ENCODE measurements at regions of chr11 and their contacts with region 1.

Region 1: GRCh38 chr11:62542750-62543567 is 3.6 kb downstream of the AHNAK start:
- DNase-seq: peak in 1 of 2 experiments; percentile 96
- H3K4me3 ChIP-seq: peak overlapping the region in 2 of 4 experiments; percentile 20 to 45; a peak in 4 of 8 replicates
- H3K27ac ChIP-seq: no peak overlapping the region
- H3K4me1 ChIP-seq: peaks cover 4 to 38% (median 23%) of the 10 kb centered on the region in 4 experiments
- H3K27me3 ChIP-seq: peaks cover 33 to 51% (median 48%) of the 10 kb centered on the region in 4 experiments
- CTCF ChIP-seq: peak in 2 of 3 experiments; percentile 96 to 97; a peak in 3 of 4 replicates
- EP300 ChIP-seq: no peak
- POLR2A ChIP-seq: no peak
- RAD21 ChIP-seq: peak; percentile 91 to 95

Region 2: DNA sequence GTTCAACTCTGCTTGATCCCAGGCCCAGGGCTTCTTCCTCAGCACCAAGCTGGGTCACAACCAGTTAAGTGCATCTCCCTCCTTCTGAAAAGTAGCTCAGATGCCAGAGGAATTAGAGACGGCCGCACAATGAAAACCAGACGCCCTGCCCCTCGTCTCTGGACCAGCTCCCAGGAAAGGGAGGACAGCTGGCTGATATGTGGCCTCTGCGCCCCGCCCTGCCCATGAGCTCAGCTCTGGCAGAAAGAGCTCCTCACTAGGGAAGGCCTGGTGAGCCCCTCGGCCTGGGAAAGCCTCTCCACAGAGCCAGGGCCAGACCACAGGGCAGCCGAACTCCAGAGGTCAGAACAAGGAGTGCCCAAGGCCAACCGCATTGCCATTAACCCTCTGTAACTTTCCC is 142.2 kb before region 1 on chr11:
- CTCF ChIA-PET with region 1: interaction called, 113 read pairs
- POLR2A ChIA-PET with region 1: interaction called, 3 read pairs
- DNase-seq: no peak
- H3K4me3 ChIP-seq: no peak overlapping the region
- H3K27ac ChIP-seq: no peak overlapping the region
- H3K4me1 ChIP-seq: peaks cover 0 to 23% (median 1%) of the 10 kb centered on the region in 4 experiments; a peak in 5 of 7 replicates
- H3K27me3 ChIP-seq: 0 out of 7 replicates have a peak, but pooled peaks cover 0 to 2% (median 0%) of the 10 kb centered on the region in 4 experiments
- CTCF ChIP-seq: no peak
- EP300 ChIP-seq: no peak
- POLR2A ChIP-seq: no peak
- RAD21 ChIP-seq: no peak

Region 3: DNA sequence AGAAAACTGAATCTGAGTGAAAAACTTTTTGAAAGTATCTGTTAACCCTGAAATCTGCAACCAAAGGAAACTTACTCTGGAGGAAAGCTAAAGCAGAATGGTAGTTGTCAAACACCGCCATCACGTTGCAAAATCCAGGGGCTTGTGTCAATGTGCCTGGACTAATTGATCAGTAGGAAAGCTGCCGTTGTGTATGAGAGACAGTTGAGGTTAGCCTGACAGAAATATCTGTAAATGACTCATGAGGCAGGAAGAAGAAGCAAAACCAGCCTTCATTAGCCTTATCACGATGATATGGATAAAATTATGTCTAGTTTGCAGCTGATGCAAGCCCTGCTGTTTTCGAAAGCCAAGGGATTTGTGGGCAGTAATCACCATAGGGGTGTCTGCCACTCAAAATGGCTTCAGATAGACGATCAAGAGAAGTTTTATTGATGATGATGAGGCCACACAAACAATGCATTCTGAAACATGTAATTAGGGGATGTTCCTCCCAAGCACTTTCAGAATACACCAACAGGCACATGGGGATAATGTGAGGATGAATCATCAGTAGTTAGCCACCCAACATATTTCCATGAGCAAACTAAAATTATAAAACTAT is 115.2 kb before region 1 on chr11:
- CTCF ChIA-PET with region 1: interaction called, 165 read pairs
- POLR2A ChIA-PET with region 1: interaction called, 3 read pairs
- DNase-seq: no peak
- H3K4me3 ChIP-seq: no peak overlapping the region
- H3K27ac ChIP-seq: no peak overlapping the region
- H3K4me1 ChIP-seq: 0 out of 7 replicates have a peak, but pooled peaks cover 0 to 2% (median 0%) of the 10 kb centered on the region in 4 experiments
- H3K27me3 ChIP-seq: peaks cover 0 to 15% (median 10%) of the 10 kb centered on the region in 4 experiments; a peak in 6 of 7 replicates
- CTCF ChIP-seq: no peak
- EP300 ChIP-seq: no peak
- POLR2A ChIP-seq: no peak
- RAD21 ChIP-seq: no peak

Region 4: GRCh38 chr11:62487738-62488551 is 55.0 kb before region 1 on chr11:
- CTCF ChIA-PET with region 1: interaction called, 34 read pairs
- POLR2A ChIA-PET with region 1: interaction called, 3 read pairs
- DNase-seq: no peak
- H3K4me3 ChIP-seq: no peak overlapping the region
- H3K27ac ChIP-seq: no peak overlapping the region
- H3K4me1 ChIP-seq: no peaks in the 10 kb centered on the region; a peak in 1 of 7 replicates
- H3K27me3 ChIP-seq: no peaks in the 10 kb centered on the region; a peak in 1 of 7 replicates
- CTCF ChIP-seq: no peak
- EP300 ChIP-seq: no peak
- POLR2A ChIP-seq: no peak
- RAD21 ChIP-seq: no peak

Region 5: DNA sequence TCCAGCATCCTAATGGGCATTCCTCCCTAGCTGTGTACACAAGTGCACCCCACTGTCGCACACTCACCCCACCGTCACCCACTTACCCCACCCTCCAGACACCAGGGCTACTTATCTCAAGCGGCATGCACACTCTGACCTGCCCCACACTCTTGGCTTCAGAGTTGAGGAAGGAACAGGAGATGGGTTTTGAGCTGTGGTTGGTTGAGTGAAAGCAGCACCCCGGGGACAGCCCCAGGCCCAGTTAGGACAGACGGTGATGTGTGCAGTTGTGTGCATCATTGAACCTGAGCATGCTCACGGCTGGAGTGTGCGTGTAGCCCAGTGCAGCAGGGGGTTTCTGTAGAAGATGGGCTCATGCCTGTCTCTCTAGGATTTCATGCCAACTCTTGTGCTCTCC is 28.8 kb before region 1 on chr11:
- CTCF ChIA-PET with region 1: interaction called, 179 read pairs
- POLR2A ChIA-PET with region 1: interaction called, 5 read pairs
- DNase-seq: no peak
- H3K4me3 ChIP-seq: no peak overlapping the region
- H3K27ac ChIP-seq: no peak overlapping the region
- H3K4me1 ChIP-seq: no peaks in the 10 kb centered on the region
- H3K27me3 ChIP-seq: no peaks in the 10 kb centered on the region
- CTCF ChIP-seq: no peak
- EP300 ChIP-seq: no peak
- POLR2A ChIP-seq: no peak
- RAD21 ChIP-seq: no peak